HCT116 (cell line): ENCODE measurements at regions of chr2 and their contacts with region 1.

Region 1: DNA sequence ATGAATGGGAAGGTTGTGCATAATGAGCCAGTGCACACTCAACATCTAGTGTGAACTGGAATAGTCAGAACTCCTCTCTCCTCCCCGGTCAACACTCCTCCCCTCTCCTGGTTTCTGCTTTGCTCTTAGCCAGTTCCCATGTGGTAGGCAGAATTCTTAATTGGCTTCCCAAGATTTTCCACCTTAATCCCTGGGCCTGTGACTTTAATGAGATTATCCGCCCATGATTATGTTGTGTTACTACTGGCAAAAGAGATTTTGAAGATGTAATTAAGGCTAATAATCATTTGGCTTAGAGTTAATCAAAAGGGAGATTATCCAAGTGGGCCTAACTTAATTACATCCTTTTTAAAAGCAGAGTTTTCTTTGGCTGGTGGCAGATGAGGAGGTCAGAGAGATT is 34.2 kb upstream of the REV1 start:
- DNase-seq: no peak
- ATAC-seq: no peak
- H3K4me3 ChIP-seq: no peak overlapping the region
- H3K27ac ChIP-seq: no peak overlapping the region
- H3K4me1 ChIP-seq: no peaks in the 10 kb centered on the region
- H3K27me3 ChIP-seq: no peaks in the 10 kb centered on the region
- CTCF ChIP-seq: no peak
- POLR2A ChIP-seq: no peak
- RAD21 ChIP-seq: no peak

Region 2: DNA sequence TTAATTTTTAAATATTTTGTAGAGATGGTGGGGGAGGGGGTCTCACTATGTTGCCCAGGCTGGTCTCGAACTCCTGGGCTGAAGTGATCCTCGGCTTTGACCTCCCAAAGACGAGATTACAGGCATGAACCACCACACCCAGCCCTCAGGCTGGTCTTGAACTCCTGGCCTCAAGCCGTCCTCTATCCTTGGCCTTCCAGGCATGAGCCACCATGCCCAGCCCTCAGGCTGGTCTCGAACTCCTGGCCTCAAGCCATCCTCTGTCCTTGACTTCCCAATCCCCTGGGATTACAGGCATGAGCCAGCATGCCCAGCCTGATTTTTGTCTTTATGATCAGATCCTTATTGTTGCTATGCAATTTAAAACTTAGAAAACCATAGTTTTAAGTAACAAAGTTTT is 212.6 kb before region 1 on chr2:
- CTCF ChIA-PET with region 1: no interaction called
- POLR2A ChIA-PET with region 1: no interaction called
- RAD21 ChIA-PET with region 1: no interaction called
- intact Hi-C with region 1: no loop called
- DNase-seq: no peak
- ATAC-seq: no peak
- H3K4me3 ChIP-seq: no peak overlapping the region
- H3K27ac ChIP-seq: no peak overlapping the region
- H3K4me1 ChIP-seq: no peaks in the 10 kb centered on the region
- H3K27me3 ChIP-seq: no peaks in the 10 kb centered on the region
- CTCF ChIP-seq: no peak
- POLR2A ChIP-seq: no peak
- RAD21 ChIP-seq: no peak

Region 3: DNA sequence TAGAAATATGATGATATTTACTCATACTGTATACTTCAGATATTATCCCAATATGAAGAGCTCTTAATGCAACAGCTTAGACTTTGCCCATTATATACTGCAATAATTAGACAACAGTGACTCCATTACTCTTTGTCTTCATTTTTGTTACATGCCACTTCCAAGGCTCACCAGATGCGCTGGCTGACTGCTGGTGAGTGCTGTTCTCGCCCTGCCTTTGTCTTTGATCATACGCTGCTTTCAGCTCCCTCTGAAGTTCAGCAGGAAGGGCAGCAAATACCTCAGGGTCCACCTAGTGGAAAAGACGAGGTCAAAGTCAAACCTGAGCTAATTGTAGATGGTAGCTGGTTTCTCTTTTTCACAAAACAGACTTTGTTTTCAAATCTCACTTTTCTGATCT is 120.5 kb before region 1 on chr2:
- CTCF ChIA-PET with region 1: no interaction called
- POLR2A ChIA-PET with region 1: no interaction called
- RAD21 ChIA-PET with region 1: no interaction called
- intact Hi-C with region 1: no loop called
- DNase-seq: no peak
- ATAC-seq: peak; percentile 52
- H3K4me3 ChIP-seq: no peak overlapping the region
- H3K27ac ChIP-seq: no peak overlapping the region
- H3K4me1 ChIP-seq: peaks cover 0 to 6% of the 10 kb centered on the region in 2 experiments; a peak in 1 of 4 replicates
- H3K27me3 ChIP-seq: no peaks in the 10 kb centered on the region
- CTCF ChIP-seq: no peak
- POLR2A ChIP-seq: no peak
- RAD21 ChIP-seq: peak; percentile 17; the same call in 1 of the 2 replicates

Region 4: DNA sequence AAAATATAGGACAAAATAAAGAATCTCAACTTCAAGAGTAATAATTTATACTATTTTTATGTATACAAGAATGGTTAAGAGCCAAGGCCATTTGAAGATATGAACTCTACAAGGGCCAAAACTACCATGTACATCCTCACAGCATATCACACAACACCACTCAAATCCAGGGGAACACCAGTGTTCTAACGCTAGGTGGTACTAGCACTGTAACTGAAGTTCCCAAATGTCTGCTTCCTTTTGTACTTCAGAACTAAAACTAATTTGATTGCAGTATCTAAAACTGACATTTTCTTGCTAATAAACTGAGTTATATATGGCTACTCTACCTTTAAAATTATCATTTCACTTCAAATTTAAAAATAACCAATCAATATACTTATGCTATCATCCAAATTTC is 81.2 kb before region 1 on chr2:
- CTCF ChIA-PET with region 1: no interaction called
- POLR2A ChIA-PET with region 1: no interaction called
- RAD21 ChIA-PET with region 1: no interaction called
- intact Hi-C with region 1: no loop called
- DNase-seq: no peak
- ATAC-seq: no peak
- H3K4me3 ChIP-seq: no peak overlapping the region
- H3K27ac ChIP-seq: no peak overlapping the region
- H3K4me1 ChIP-seq: no peaks in the 10 kb centered on the region
- H3K27me3 ChIP-seq: no peaks in the 10 kb centered on the region
- CTCF ChIP-seq: no peak
- POLR2A ChIP-seq: no peak
- RAD21 ChIP-seq: no peak

Region 5: DNA sequence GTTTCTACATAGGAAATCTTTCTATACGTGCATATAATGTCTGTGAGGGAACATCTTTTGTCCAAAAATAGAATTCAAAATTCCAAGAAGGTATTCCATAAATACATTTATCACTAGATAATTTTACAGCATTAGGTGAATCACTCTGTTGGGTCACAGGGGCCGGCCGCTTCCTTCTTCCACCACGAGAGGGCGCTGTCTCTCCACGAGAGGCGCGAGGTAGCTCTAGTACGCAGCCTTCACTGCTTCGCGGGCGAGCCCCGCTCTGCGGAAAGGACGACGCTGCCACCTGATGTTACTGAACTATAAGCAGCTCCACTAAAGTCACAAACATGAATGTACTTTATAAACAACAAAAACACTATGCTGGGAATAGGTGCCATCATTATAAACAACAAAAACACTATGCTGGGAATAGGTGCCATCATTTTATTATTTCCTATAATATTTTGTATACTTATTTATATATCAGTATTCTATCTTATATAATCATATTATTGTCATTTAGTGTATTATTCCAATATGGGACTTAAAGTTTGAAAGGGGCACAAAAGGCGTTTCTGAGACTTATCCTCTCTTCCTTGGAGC is 35.1 kb after region 1 on chr2:
- CTCF ChIA-PET with region 1: no interaction called
- POLR2A ChIA-PET with region 1: no interaction called
- RAD21 ChIA-PET with region 1: no interaction called
- intact Hi-C with region 1: no loop called
- DNase-seq: peak; percentile 56
- ATAC-seq: peak; percentile 97
- H3K4me3 ChIP-seq: no peak overlapping the region
- H3K27ac ChIP-seq: no peak overlapping the region
- H3K4me1 ChIP-seq: no peaks in the 10 kb centered on the region
- H3K27me3 ChIP-seq: peaks cover 15% of the 10 kb centered on the region
- CTCF ChIP-seq: peak; percentile 95 to 98 (median 96)
- POLR2A ChIP-seq: no peak
- RAD21 ChIP-seq: peak; percentile 96

Region 6: GRCh38 chr2:100482741-100483140 is 958.7 kb after region 1 on chr2:
- CTCF ChIA-PET with region 1: no interaction called
- POLR2A ChIA-PET with region 1: no interaction called
- RAD21 ChIA-PET with region 1: no interaction called
- intact Hi-C with region 1: loop called (anchors 5 kb)
- DNase-seq: no peak
- ATAC-seq: peak; percentile 61
- H3K4me3 ChIP-seq: no peak overlapping the region
- H3K27ac ChIP-seq: no peak overlapping the region
- H3K4me1 ChIP-seq: no peaks in the 10 kb centered on the region
- H3K27me3 ChIP-seq: peaks cover 6% of the 10 kb centered on the region; the same call in 1 of the 2 replicates
- CTCF ChIP-seq: peak in 2 of 3 experiments; percentile 19 to 37; a peak in 2 of 6 replicates
- POLR2A ChIP-seq: no peak
- RAD21 ChIP-seq: no peak